ENCODE measurements at regions of chr12 and their contacts with region 1.

Region 1: DNA sequence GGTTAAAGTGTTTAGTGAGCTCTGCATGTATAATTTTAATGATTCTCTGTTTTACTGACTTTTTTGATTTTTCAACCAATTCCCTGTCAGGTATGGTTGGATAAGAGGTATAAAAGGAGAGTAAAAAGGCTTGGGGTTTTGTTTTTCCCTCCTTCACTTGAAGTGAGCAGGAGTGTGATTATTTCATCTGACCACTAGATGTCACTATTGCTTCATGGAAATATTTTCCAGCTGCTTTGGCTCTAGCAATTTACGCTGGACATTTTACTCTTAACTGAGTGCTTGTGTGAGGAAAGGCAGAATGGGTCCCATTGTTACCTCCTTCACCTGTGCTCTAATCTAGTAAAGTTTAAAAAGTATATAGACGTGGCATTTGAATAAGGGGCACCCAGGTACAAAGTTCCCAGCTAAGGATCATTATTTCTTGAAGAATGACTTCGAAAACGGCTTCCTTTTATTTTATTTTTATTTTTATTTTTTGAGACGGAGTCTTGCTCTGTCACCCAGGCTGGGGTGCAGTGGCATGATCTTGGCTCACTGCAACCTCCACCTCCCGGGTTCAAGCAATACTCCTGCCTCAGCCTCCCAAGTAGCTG is 66.5 kb downstream of the TBC1D30 start:
- DNase-seq: peak; percentile 60 to 83 (median 74)
- H3K4me3 ChIP-seq: no peak overlapping the region
- H3K27ac ChIP-seq: no peak overlapping the region
- H3K4me1 ChIP-seq: peaks cover 0 to 6% (median 3%) of the 10 kb centered on the region in 4 experiments
- H3K27me3 ChIP-seq: peaks cover 3 to 16% (median 10%) of the 10 kb centered on the region in 5 experiments

Region 2: GRCh38 chr12:64826234-64826633 is 64.7 kb before region 1 on chr12:
- CTCF ChIA-PET with region 1: no interaction called
- POLR2A ChIA-PET with region 1: no interaction called
- DNase-seq: peak; percentile 60 to 89 (median 84)
- H3K4me3 ChIP-seq: peak overlapping the region in 4 of 7 experiments; percentile 6 to 35 (median 27)
- H3K27ac ChIP-seq: no peak overlapping the region
- H3K4me1 ChIP-seq: peaks cover 3 to 23% (median 17%) of the 10 kb centered on the region in 4 experiments
- H3K27me3 ChIP-seq: peaks cover 25 to 77% (median 39%) of the 10 kb centered on the region in 5 experiments

Region 3: DNA sequence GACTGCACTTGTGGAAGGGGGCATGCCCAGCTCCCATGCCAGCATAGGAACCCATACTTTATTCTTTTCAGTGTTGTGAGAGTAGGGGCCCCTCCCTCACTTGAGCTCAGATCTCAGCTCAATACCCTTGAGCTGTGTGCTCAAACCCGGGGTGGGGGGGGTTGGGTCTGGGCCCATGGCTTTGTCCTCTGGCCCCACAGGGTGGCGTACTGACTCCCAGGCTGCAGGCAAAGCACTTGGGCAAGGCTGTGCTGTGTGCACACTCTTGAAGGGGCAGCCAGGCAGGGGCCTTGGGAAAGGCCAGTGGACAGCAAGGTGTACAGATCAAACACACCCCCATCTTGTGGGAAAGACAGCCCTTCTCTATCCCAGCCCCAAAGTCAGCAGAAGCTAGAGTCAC is 148.3 kb after region 1 on chr12:
- CTCF ChIA-PET with region 1: no interaction called
- POLR2A ChIA-PET with region 1: no interaction called
- DNase-seq: no peak
- H3K4me3 ChIP-seq: no peak overlapping the region
- H3K27ac ChIP-seq: no peak overlapping the region
- H3K4me1 ChIP-seq: no peaks in the 10 kb centered on the region
- H3K27me3 ChIP-seq: peaks cover 0 to 5% (median 0%) of the 10 kb centered on the region in 5 experiments

Region 4: GRCh38 chr12:65100140-65100539 is 209.2 kb after region 1 on chr12:
- CTCF ChIA-PET with region 1: interaction called, 113 read pairs
- POLR2A ChIA-PET with region 1: no interaction called
- DNase-seq: peak; percentile 46 to 63 (median 59)
- H3K4me3 ChIP-seq: no peak overlapping the region
- H3K27ac ChIP-seq: no peak overlapping the region
- H3K4me1 ChIP-seq: no peaks in the 10 kb centered on the region
- H3K27me3 ChIP-seq: peaks cover 0 to 6% (median 0%) of the 10 kb centered on the region in 5 experiments

Region 5: GRCh38 chr12:65106948-65107347 is 216.0 kb after region 1 on chr12:
- CTCF ChIA-PET with region 1: interaction called, 113 read pairs
- POLR2A ChIA-PET with region 1: no interaction called
- DNase-seq: peak in 2 of 3 donors; percentile 28 to 31
- H3K4me3 ChIP-seq: no peak overlapping the region
- H3K27ac ChIP-seq: no peak overlapping the region
- H3K4me1 ChIP-seq: no peaks in the 10 kb centered on the region
- H3K27me3 ChIP-seq: peaks cover 0 to 4% (median 0%) of the 10 kb centered on the region in 5 experiments

Region 6: GRCh38 chr12:65121049-65121955 is 230.3 kb after region 1 on chr12 and contains the start of gene WIF1:
- CTCF ChIA-PET with region 1: interaction called, 12 read pairs
- POLR2A ChIA-PET with region 1: no interaction called
- DNase-seq: peak; percentile 44 to 68 (median 63)
- H3K4me3 ChIP-seq: peak within 1 kb of the TSS; percentile 27 to 63 (median 50)
- H3K27ac ChIP-seq: no peak within 1 kb of the TSS
- H3K4me1 ChIP-seq: peaks cover 0 to 30% (median 22%) of the 10 kb centered on the region in 4 experiments
- H3K27me3 ChIP-seq: peaks cover 8 to 35% (median 20%) of the 10 kb centered on the region in 5 experiments